ENCODE measurements at regions of chr4 and their contacts with region 1.

Region 1: GRCh38 chr4:77095101-77095821 is 19.5 kb upstream of the CCNI start:
- DNase-seq: peak; percentile 89
- ATAC-seq: peak; percentile 100
- H3K4me3 Mint-ChIP-seq: no peak overlapping the region
- H3K27ac Mint-ChIP-seq: no peak overlapping the region
- H3K4me1 Mint-ChIP-seq: peaks cover 11% of the 10 kb centered on the region
- H3K27me3 Mint-ChIP-seq: no peaks in the 10 kb centered on the region
- CTCF ChIP-seq: peak; percentile 85

Region 2: GRCh38 chr4:77044461-77045150 is 50.7 kb before region 1 on chr4:
- CTCF ChIA-PET with region 1: interaction called, 13 read pairs
- POLR2A ChIA-PET with region 1: no interaction called
- intact Hi-C with region 1: no loop called
- DNase-seq: no peak
- ATAC-seq: peak; percentile 62
- H3K4me3 Mint-ChIP-seq: no peak overlapping the region
- H3K27ac Mint-ChIP-seq: no peak overlapping the region
- H3K4me1 Mint-ChIP-seq: peaks cover 15% of the 10 kb centered on the region
- H3K27me3 Mint-ChIP-seq: no peaks in the 10 kb centered on the region
- CTCF ChIP-seq: peak; percentile 63

Region 3: GRCh38 chr4:77075869-77076799 is 19.1 kb before region 1 on chr4 and contains the start of gene CCNI:
- CTCF ChIA-PET with region 1: interaction called, 39 read pairs
- POLR2A ChIA-PET with region 1: no interaction called
- intact Hi-C with region 1: no loop called
- DNase-seq: peak; percentile 92
- ATAC-seq: peak; percentile 77
- H3K4me3 Mint-ChIP-seq: no peak within 1 kb of the TSS
- H3K27ac Mint-ChIP-seq: peak within 1 kb of the TSS; percentile 100
- H3K4me1 Mint-ChIP-seq: peaks cover 36% of the 10 kb centered on the region
- H3K27me3 Mint-ChIP-seq: no peaks in the 10 kb centered on the region
- CTCF ChIP-seq: no peak
- total RNA-seq, gene CCNI: 257 to 272 TPM

Region 4: GRCh38 chr4:77126809-77127208 is 31.5 kb after region 1 on chr4:
- CTCF ChIA-PET with region 1: interaction called, 13 read pairs
- POLR2A ChIA-PET with region 1: no interaction called
- intact Hi-C with region 1: no loop called
- DNase-seq: no peak
- ATAC-seq: no peak
- H3K4me3 Mint-ChIP-seq: no peak overlapping the region
- H3K27ac Mint-ChIP-seq: no peak overlapping the region
- H3K4me1 Mint-ChIP-seq: peaks cover 12% of the 10 kb centered on the region
- H3K27me3 Mint-ChIP-seq: no peaks in the 10 kb centered on the region
- CTCF ChIP-seq: no peak

Region 5: GRCh38 chr4:77141964-77142645 is 46.8 kb after region 1 on chr4:
- CTCF ChIA-PET with region 1: interaction called, 17 read pairs
- POLR2A ChIA-PET with region 1: no interaction called
- intact Hi-C with region 1: no loop called
- DNase-seq: no peak
- ATAC-seq: no peak
- H3K4me3 Mint-ChIP-seq: no peak overlapping the region
- H3K27ac Mint-ChIP-seq: peak overlapping the region; percentile 15
- H3K4me1 Mint-ChIP-seq: peaks cover 16% of the 10 kb centered on the region
- H3K27me3 Mint-ChIP-seq: no peaks in the 10 kb centered on the region
- CTCF ChIP-seq: no peak

Region 6: GRCh38 chr4:77193511-77194102 is 98.3 kb after region 1 on chr4:
- CTCF ChIA-PET with region 1: interaction called, 12 read pairs
- POLR2A ChIA-PET with region 1: no interaction called
- intact Hi-C with region 1: no loop called
- DNase-seq: peak; percentile 89
- ATAC-seq: peak; percentile 97
- H3K4me3 Mint-ChIP-seq: peak overlapping the region; percentile 72
- H3K27ac Mint-ChIP-seq: peak overlapping the region; percentile 82
- H3K4me1 Mint-ChIP-seq: peaks cover 20% of the 10 kb centered on the region
- H3K27me3 Mint-ChIP-seq: peaks cover 2% of the 10 kb centered on the region
- CTCF ChIP-seq: no peak

Region 7: DNA sequence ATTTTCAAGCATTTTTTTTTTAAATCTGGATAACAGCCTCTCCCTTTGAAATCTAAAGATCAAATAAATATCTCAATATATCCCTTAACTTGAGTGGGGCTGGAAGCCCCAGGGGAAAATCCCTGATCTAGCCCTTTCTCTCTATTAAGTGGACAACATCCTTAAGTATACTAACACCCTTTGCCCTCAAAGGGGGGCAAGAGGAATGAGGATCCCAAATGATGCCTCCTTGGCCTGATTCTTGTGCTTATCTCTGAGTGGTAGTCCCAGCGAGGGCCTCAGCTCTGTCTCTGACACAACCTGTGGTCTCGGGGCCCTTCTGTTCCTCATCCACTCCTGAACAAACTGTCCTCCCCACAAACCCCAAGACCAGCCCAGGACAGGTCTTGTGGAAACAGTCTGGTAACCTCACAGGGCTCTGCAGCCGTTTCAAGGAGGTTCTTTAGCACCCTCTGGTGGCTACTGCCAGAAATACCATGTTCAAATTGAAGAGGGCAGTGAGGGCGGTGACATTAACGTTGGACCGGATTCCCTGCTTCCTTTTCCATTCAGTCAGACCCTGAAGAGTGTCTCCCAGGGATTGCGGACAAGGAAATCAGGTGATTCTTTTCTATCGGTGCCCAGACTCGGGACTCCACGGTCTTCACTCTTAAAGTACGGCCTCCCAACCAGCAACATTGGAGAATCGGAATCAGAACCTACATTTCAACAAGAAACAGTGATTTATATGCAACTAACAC is 523.3 kb after region 1 on chr4:
- CTCF ChIA-PET with region 1: no interaction called
- POLR2A ChIA-PET with region 1: no interaction called
- intact Hi-C with region 1: no loop called
- DNase-seq: peak; percentile 79
- ATAC-seq: peak; percentile 93
- H3K4me3 Mint-ChIP-seq: no peak overlapping the region
- H3K27ac Mint-ChIP-seq: no peak overlapping the region
- H3K4me1 Mint-ChIP-seq: peaks cover 6% of the 10 kb centered on the region
- H3K27me3 Mint-ChIP-seq: peaks cover 15% of the 10 kb centered on the region
- CTCF ChIP-seq: peak; percentile 85